OCI-LY7 (cell line): ENCODE measurements at regions of chr11 and their contacts with region 1.

Region 1: GRCh38 chr11:121655537-121656327 is 203.0 kb upstream of the SORL1-AS1 start:
- DNase-seq: peak; percentile 80
- H3K4me3 ChIP-seq: peak overlapping the region; percentile 38
- H3K27ac ChIP-seq: no peak overlapping the region
- H3K4me1 ChIP-seq: peaks cover 13% of the 10 kb centered on the region
- CTCF ChIP-seq: peak; percentile 80

Region 2: DNA sequence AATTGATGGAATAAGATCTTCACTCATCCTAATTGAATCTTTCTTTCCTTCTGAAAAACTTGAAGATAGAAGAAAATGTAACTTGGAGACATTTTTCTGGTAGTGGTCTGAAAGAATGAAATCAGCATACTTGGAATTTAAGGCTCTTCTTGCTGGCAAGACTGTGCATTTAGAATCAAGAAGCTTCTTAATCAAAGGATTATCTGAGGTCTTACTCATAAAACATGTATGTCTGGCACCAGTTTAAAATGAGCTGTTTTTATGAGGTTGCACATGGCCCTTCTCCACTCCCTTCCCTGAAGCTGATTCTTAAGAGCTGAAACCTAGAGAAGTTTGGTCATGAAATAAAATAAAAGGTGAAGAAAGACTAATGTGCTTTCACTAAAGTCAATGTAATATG is 1242.3 kb before region 1 on chr11:
- CTCF ChIA-PET with region 1: no interaction called
- POLR2A ChIA-PET with region 1: no interaction called
- intact Hi-C with region 1: no loop called
- DNase-seq: no peak
- H3K4me3 ChIP-seq: no peak overlapping the region
- H3K27ac ChIP-seq: no peak overlapping the region
- H3K4me1 ChIP-seq: no peaks in the 10 kb centered on the region
- CTCF ChIP-seq: no peak

Region 3: DNA sequence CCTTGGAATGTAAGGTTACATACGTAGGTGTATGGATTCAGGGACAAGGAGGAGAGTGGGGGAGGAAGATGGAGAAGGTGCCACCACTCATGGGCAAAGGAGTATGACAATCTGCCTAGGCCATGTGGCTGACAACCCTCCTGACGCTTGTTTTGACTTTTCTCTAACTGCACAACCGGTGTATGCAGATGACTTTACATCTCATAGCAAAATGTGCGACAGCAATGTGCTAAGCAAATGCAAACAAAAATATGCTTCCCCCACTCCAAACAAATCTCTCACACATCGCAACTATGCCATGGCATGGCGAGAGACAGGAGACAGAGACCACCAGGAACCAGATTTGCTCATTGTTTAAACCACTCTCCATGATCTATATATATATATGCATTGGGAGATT is 268.5 kb after region 1 on chr11:
- CTCF ChIA-PET with region 1: no interaction called
- POLR2A ChIA-PET with region 1: no interaction called
- intact Hi-C with region 1: loop called (anchors 5 kb)
- DNase-seq: no peak
- H3K4me3 ChIP-seq: no peak overlapping the region
- H3K27ac ChIP-seq: no peak overlapping the region
- H3K4me1 ChIP-seq: no peaks in the 10 kb centered on the region
- CTCF ChIP-seq: no peak

Region 4: GRCh38 chr11:122202951-122203456 is 547.3 kb after region 1 on chr11:
- CTCF ChIA-PET with region 1: interaction called, 3 read pairs
- POLR2A ChIA-PET with region 1: no interaction called
- intact Hi-C with region 1: loop called (anchors 2 kb)
- DNase-seq: peak; percentile 30
- H3K4me3 ChIP-seq: no peak overlapping the region
- H3K27ac ChIP-seq: no peak overlapping the region
- H3K4me1 ChIP-seq: no peaks in the 10 kb centered on the region
- CTCF ChIP-seq: peak; percentile 89

Region 5: DNA sequence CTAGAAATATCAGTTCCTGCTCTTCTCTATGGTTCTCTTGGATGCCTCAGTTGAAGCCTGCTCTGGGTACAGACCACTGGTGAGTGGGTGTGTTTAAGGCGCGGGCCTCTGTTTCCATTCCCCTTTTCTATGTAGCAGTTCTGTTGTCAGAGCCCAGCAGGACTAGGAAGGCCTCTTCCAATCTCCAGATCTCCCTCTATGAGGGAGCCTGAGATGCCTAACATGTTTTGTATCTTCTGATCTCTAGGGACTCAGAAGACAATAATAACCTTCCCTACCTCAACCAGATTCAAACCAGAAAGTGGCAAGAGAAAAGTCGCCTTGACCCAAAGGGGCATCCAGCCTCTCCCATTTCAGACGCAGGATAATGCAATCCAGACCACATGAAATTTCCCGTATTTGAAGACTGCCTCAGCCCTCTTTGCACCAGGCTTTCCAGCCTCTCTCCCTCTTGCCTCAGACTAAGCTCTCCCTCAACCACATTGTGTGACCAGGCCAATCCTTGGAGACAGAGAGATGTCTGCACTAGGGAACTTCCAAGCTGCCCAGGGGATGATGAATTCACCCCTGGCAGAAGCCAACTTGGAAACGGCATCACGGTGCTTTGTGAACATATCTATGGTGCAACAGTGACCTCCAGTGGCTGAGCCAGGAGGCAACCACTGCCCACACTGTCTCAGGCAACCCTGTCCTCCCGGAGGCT is 849.7 kb after region 1 on chr11:
- CTCF ChIA-PET with region 1: no interaction called
- POLR2A ChIA-PET with region 1: no interaction called
- intact Hi-C with region 1: loop called (anchors 5 kb)
- DNase-seq: peak; percentile 46
- H3K4me3 ChIP-seq: no peak overlapping the region
- H3K27ac ChIP-seq: no peak overlapping the region
- H3K4me1 ChIP-seq: no peaks in the 10 kb centered on the region
- CTCF ChIP-seq: peak; percentile 85